T-cell (primary cell): ENCODE measurements at regions of chr10 and their contacts with region 1.

Region 1: DNA sequence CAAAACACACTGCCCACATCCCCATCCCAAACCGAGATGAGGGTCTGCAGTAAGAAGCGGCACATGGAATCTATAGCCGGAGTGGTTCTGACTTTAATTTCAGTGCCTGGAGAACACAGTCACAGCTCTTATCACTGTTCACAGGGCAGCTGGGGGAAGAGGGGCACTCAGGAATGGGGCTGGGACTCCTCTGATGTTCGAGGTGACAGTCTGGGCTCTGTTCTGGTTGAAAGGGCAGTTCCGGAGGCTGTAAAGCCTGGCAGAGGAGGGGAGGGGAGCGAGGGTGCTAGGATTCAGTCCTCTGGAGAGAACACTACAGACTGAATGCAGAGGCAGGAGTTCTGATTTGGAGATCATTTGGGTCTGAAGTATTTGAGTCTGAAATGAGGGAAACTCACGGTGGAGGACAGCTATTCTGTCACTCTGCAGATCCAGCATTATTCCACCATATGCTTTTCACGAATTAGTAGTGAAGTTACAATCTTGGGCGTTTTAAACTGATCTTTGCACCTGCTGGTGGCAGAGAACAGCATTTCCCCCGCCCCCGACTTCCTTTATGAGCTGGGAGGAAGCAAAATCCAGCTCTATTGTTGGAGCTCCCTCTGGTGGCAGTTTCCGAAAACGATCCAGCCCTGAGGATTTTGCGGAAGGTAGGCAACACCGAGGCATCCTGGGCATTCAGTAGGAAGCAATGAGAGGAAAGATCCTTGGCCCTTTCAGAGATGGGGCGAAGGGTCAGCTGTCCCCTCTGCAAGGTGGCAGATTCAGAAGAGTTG is 22.7 kb upstream of the KCNK18 start:
- DNase-seq: peak; percentile 65 to 88 (median 77)
- ATAC-seq: peak; percentile 82 to 89 (median 87)
- H3K4me3 ChIP-seq: peak overlapping the region; percentile 57 to 80
- H3K4me3 Mint-ChIP-seq: peak overlapping the region; percentile 84 to 89 (median 88)
- H3K27ac ChIP-seq: no peak overlapping the region
- H3K27ac Mint-ChIP-seq: peak overlapping the region; percentile 28 to 74
- H3K4me1 ChIP-seq: peaks cover 8 to 17% of the 10 kb centered on the region in 2 experiments
- H3K4me1 Mint-ChIP-seq: peaks cover 15 to 18% (median 17%) of the 10 kb centered on the region in 3 donors
- H3K27me3 ChIP-seq: peaks cover 17 to 25% of the 10 kb centered on the region in 2 experiments
- H3K27me3 Mint-ChIP-seq: peaks cover 35 to 42% of the 10 kb centered on the region in 2 donors

Region 2: DNA sequence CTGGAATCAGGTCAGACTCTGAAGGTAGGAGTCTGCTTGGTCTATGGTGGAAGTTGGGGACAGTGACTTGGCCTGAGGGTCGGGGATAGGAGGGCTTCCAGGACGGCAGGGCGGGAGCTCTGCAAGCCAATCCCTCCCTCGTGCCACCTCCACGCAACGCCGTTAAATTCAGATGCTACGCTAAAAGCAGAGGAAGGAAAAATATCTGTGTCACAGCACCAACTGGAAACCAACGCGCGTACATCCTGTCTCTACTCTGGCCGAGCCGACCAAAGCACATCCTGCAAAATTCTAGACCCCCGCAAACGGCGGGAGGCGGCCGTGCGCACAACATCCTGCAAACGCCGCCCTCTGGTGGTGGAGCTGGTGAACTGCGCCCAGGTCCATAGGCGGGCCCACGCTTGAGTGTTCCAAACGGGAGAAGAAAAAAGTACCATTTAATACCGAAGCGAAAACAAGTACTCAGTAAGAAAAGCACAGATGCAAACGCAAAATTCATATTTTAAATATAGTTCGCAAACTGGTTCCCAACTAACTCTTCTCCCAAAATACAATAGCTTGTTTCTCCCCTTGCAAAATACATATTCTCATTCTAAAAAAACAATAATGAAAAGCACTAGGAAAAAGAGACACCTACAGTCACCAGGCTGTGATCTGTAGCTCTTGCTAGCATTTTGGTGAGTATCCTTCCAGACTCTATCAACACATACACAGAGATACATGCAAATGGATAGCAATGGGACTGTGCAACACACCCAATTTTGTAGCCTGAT is 386.5 kb before region 1 on chr10:
- CTCF ChIA-PET with region 1: interaction called, 17 to 33 read pairs
- POLR2A ChIA-PET with region 1: interaction called in 1 of 2 experiments, 3 read pairs
- DNase-seq: peak; percentile 60 to 83 (median 73)
- ATAC-seq: peak; percentile 86 to 96 (median 88)
- H3K4me3 ChIP-seq: peak overlapping the region; percentile 6 to 55
- H3K4me3 Mint-ChIP-seq: peak overlapping the region; percentile 21 to 56 (median 52)
- H3K27ac ChIP-seq: no peak overlapping the region
- H3K27ac Mint-ChIP-seq: peak overlapping the region in 1 of 2 donors; percentile 16
- H3K4me1 ChIP-seq: peaks cover 0 to 8% of the 10 kb centered on the region in 2 experiments
- H3K4me1 Mint-ChIP-seq: peaks cover 14 to 15% (median 15%) of the 10 kb centered on the region in 3 donors
- H3K27me3 ChIP-seq: peaks cover 0 to 37% of the 10 kb centered on the region in 2 experiments
- H3K27me3 Mint-ChIP-seq: peaks cover 21 to 22% of the 10 kb centered on the region in 2 donors

Region 3: GRCh38 chr10:116796910-116797513 is 377.6 kb before region 1 on chr10:
- CTCF ChIA-PET with region 1: interaction called, 21 to 108 read pairs
- POLR2A ChIA-PET with region 1: no interaction called
- DNase-seq: peak; percentile 12 to 77 (median 54)
- ATAC-seq: peak; percentile 52 to 72 (median 68)
- H3K4me3 ChIP-seq: no peak overlapping the region
- H3K4me3 Mint-ChIP-seq: no peak overlapping the region
- H3K27ac ChIP-seq: no peak overlapping the region
- H3K27ac Mint-ChIP-seq: no peak overlapping the region
- H3K4me1 ChIP-seq: no peaks in the 10 kb centered on the region
- H3K4me1 Mint-ChIP-seq: no peaks in the 10 kb centered on the region
- H3K27me3 ChIP-seq: peaks cover 0 to 44% of the 10 kb centered on the region in 2 experiments
- H3K27me3 Mint-ChIP-seq: peaks cover 19 to 26% of the 10 kb centered on the region in 2 donors

Region 4: GRCh38 chr10:117107238-117107637 is 67.4 kb before region 1 on chr10:
- CTCF ChIA-PET with region 1: no interaction called
- POLR2A ChIA-PET with region 1: no interaction called
- DNase-seq: no peak
- ATAC-seq: no peak
- H3K4me3 ChIP-seq: no peak overlapping the region
- H3K4me3 Mint-ChIP-seq: no peak overlapping the region
- H3K27ac ChIP-seq: no peak overlapping the region
- H3K27ac Mint-ChIP-seq: no peak overlapping the region
- H3K4me1 ChIP-seq: no peaks in the 10 kb centered on the region
- H3K4me1 Mint-ChIP-seq: peaks cover 0 to 4% (median 0%) of the 10 kb centered on the region in 3 donors
- H3K27me3 ChIP-seq: peaks cover 0 to 3% of the 10 kb centered on the region in 2 experiments
- H3K27me3 Mint-ChIP-seq: peaks cover 16 to 33% of the 10 kb centered on the region in 2 donors

Region 5: DNA sequence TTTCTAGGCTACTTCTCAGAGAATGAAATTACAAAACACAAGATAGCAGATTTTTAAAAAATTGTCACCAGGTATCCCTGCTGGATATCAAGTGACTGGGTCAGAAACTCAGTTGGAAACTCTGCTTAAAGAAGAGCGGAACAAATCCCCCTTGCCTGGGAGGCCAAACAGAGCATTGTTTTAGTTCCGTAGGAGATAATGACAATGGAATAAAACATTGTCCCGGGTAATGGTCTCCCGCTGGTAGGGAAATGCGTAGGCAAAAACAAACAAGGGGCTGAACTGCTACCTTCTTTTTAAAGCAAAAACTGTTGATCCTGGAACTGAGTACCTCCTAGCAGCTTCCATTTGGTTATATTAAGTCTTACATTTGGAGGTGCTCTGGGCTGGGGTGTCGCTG is 15.2 kb before region 1 on chr10:
- CTCF ChIA-PET with region 1: interaction called, 5 to 15 read pairs
- POLR2A ChIA-PET with region 1: no interaction called
- DNase-seq: no peak
- ATAC-seq: no peak
- H3K4me3 ChIP-seq: no peak overlapping the region
- H3K4me3 Mint-ChIP-seq: no peak overlapping the region
- H3K27ac ChIP-seq: no peak overlapping the region
- H3K27ac Mint-ChIP-seq: no peak overlapping the region
- H3K4me1 ChIP-seq: peaks cover 2 to 18% of the 10 kb centered on the region in 2 experiments
- H3K4me1 Mint-ChIP-seq: peaks cover 16 to 19% (median 17%) of the 10 kb centered on the region in 3 donors
- H3K27me3 ChIP-seq: peaks cover 40 to 54% of the 10 kb centered on the region in 2 experiments
- H3K27me3 Mint-ChIP-seq: peaks cover 80 to 83% of the 10 kb centered on the region in 2 donors

Region 6: DNA sequence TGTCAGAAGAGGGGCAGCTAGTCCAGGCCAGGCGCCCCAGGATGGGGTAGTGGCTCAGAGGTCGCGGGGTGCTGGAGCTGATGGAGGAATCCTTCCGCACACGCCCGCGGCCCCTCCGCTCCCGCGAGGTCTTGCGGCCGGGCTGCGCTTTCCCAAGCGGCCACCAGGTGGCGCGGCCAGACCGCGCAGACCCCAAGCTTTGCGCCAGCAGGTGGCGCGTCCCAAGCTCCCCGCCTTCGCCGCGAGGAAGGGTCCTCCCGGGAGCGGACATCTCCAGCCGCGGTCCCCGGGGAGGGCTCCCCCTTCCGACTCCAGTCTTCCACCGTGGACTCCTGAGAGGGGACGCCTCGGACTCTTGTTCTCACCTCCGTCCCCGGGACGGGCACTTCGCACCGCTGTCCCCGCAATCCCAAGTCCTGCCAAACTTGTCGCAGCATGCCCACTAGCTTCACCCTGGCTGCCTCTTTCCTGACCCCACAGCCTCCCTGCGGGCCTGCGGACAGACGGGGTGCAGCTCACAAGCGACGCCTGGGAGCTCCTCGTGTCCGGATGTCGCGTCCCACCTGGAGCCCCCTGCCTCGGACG is 42.1 kb after region 1 on chr10:
- CTCF ChIA-PET with region 1: interaction called, 4 to 17 read pairs
- POLR2A ChIA-PET with region 1: no interaction called
- DNase-seq: peak; percentile 8 to 84 (median 55)
- ATAC-seq: peak; percentile 75 to 90 (median 84)
- H3K4me3 ChIP-seq: peak overlapping the region; percentile 61 to 80
- H3K4me3 Mint-ChIP-seq: peak overlapping the region; percentile 68 to 79 (median 72)
- H3K27ac ChIP-seq: no peak overlapping the region
- H3K27ac Mint-ChIP-seq: no peak overlapping the region
- H3K4me1 ChIP-seq: peaks cover 2 to 16% of the 10 kb centered on the region in 2 experiments
- H3K4me1 Mint-ChIP-seq: peaks cover 6 to 11% (median 9%) of the 10 kb centered on the region in 3 donors
- H3K27me3 ChIP-seq: peaks cover 2 to 45% of the 10 kb centered on the region in 2 experiments
- H3K27me3 Mint-ChIP-seq: peaks cover 21 to 33% of the 10 kb centered on the region in 2 donors